ENCODE measurements at regions of chr19 and their contacts with region 1.

Region 1: DNA sequence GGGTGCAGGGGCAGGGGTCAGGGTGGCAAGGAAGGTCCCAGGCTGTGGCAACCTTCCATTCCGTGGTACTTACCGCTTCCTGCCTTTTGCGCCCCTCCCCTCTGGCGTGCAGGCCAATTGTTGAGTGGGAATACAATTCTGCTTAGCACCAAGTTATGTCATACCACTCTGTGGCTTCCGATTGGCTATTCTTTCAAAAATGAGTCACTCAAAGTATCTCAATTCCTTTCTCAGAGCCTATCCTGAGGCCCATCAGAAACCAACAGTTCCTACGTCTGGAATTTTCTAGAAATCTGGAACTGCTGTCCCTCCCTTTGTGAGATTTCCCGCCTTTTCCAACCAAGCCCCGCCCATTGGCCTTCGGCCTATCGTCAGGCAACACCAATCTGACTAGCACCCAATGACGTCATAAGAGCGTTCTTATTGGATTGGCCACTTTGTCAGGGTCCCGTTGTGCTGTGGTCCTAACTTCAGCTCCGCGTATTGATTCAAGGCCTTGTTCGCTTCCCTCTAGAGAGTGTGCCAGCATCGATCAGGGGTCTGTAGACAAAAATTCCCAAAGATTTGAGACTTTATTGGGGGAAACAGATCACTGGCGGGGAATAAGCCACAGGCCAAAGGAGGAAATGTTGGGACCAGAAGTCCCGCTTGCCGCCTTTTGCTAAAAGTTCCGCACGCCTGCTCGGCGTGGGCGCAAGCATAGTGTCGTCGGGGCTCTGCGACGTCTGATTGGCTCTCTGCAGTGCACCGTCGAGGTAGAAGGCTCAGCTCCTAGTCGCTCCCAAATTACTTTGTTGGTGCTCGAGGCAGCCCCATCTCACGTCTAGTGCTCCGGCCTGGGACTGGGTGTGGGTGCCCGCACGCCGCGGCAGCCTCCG is 11.7 kb downstream of the NTN5 start:
- DNase-seq: peak; percentile 51 to 90 (median 86)
- ATAC-seq: peak; percentile 95
- H3K4me3 ChIP-seq: peak overlapping the region; percentile 28
- H3K4me3 Mint-ChIP-seq: peak overlapping the region; percentile 63 to 86 (median 80)
- H3K27ac ChIP-seq: peak overlapping the region; percentile 72
- H3K27ac Mint-ChIP-seq: peak overlapping the region; percentile 17 to 98 (median 94)
- H3K4me1 ChIP-seq: peaks cover 6 to 9% of the 10 kb centered on the region in 2 donors
- H3K4me1 Mint-ChIP-seq: peaks cover 7 to 16% (median 10%) of the 10 kb centered on the region in 7 donors
- H3K27me3 ChIP-seq: no peaks in the 10 kb centered on the region
- H3K27me3 Mint-ChIP-seq: peaks cover 0 to 11% (median 0%) of the 10 kb centered on the region in 5 donors

Region 2: DNA sequence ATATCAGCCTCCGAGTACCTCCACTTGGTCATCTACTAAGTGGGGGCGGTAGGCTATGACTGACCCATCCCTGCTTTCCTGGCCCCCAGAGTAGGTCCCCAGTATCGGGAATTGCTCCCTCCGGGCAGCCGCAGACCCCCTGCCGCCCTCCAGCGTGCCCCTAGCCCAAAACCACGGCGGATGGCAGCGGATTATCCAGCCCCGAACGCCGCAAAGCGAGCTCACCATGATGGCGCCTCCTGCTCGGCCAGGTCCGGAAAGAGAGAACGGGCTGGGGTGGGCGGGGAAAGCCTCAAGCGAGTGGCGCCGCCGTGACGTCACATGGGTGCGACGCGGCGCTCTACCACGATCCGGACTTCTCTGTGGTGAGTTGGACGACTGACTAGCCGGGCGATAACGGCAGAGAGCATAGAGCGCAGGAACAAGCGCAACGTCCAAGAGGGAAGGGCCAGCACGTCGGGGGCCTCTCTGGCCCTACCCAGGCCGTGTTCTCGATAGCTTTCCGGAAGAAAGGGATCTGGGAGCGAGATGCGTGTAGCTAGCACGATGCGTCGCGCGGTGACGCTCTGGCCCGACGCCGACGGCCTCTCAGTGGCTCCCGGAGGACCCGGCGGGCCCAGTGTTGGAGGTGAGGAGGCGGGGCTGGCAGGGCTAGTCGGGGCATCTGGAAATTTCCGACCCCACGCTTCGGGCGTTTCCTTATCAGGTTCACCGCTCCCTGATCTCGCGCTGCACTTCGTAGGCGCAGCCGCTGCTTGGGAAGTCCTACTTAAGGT is 42.0 kb before region 1 on chr19 and contains the starts of genes RPL18 and SPHK2:
- CTCF ChIA-PET with region 1: no interaction called
- POLR2A ChIA-PET with region 1: interaction called, 4 read pairs
- intact Hi-C with region 1: loop called in 1 of 2 experiments (anchors 2 kb)
- DNase-seq: peak; percentile 89 to 97 (median 95)
- ATAC-seq: peak; percentile 89
- H3K4me3 ChIP-seq: peak within 1 kb of the TSS; percentile 96
- H3K4me3 Mint-ChIP-seq: peak within 1 kb of the TSS; percentile 88 to 99 (median 96)
- H3K27ac ChIP-seq: peak within 1 kb of the TSS; percentile 95
- H3K27ac Mint-ChIP-seq: peak within 1 kb of the TSS; percentile 96 to 99 (median 98)
- H3K4me1 ChIP-seq: peaks cover 26 to 45% of the 10 kb centered on the region in 2 donors
- H3K4me1 Mint-ChIP-seq: peaks cover 40 to 64% (median 54%) of the 10 kb centered on the region in 7 donors
- H3K27me3 ChIP-seq: no peaks in the 10 kb centered on the region
- H3K27me3 Mint-ChIP-seq: no peaks in the 10 kb centered on the region
- total RNA-seq, gene RPL18: 1,570 to 2,826 (median 2,745) TPM
- total RNA-seq, gene SPHK2: 20.1 to 34.7 (median 30.5) TPM

Region 3: GRCh38 chr19:48713864-48714758 is 53.0 kb after region 1 on chr19:
- CTCF ChIA-PET with region 1: no interaction called
- POLR2A ChIA-PET with region 1: no interaction called
- intact Hi-C with region 1: loop called in 1 of 2 experiments (anchors 1 kb)
- DNase-seq: peak; percentile 92 to 97 (median 97)
- ATAC-seq: peak; percentile 96
- H3K4me3 ChIP-seq: peak overlapping the region; percentile 95
- H3K4me3 Mint-ChIP-seq: peak overlapping the region; percentile 82 to 92 (median 88)
- H3K27ac ChIP-seq: peak overlapping the region; percentile 79
- H3K27ac Mint-ChIP-seq: peak overlapping the region; percentile 16 to 90 (median 81)
- H3K4me1 ChIP-seq: peaks cover 11 to 12% of the 10 kb centered on the region in 2 donors
- H3K4me1 Mint-ChIP-seq: peaks cover 9 to 24% (median 20%) of the 10 kb centered on the region in 7 donors
- H3K27me3 ChIP-seq: no peaks in the 10 kb centered on the region
- H3K27me3 Mint-ChIP-seq: no peaks in the 10 kb centered on the region

Measured in naive thymus-derived CD4-positive, alpha-beta T cell (primary cell).